Left ventricle myocardium inferior (tissue), 1 donor: ENCODE measurements at regions of chr1 and their contacts with region 1.

Region 1: DNA sequence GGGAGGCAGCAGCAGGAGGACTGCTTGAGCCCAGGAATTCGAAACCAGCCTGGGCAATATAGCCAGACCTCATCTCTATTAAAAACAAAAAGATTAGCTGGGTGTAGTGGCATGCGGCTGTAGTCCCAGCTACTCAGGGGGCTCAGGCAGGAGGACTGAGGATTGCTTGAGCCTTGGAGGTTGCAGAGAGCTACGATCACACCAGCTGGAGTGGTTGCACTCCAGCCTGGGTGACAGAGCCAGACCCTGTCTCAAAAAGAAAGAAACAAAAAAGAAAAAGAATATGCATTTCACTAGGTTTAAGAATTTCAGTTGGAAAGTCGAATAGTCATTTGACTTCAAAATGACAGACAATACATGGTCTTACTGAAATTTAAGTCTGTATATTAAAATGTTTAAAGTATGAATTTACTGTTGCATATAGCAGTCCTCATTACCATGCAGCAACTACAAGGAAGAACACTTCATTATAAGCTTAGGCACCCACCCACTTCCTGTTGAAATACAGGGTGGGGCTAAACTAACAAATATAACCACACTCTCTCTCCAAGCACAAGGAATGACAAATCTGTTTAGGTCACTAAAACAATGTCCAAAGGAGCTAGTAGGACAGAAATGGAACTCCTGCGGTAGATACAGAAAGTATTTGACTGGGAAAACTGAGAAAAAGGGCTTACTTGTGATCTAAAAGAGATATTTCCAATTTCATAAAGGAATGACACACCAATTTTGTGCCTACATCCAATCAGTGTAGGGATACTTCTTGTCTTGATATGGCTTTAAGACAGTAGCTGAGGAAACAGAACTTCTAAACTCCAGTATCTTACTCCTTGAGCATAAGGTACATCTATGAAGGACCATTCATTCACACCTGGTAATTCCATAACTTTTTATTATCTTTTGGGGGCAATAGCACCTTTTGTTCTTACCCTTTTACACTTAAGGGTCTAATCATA is 44.1 kb downstream of the GPR3 start:
- DNase-seq: no peak
- H3K4me3 ChIP-seq: peak overlapping the region; percentile 37
- H3K27ac ChIP-seq: peak overlapping the region; percentile 90
- H3K4me1 ChIP-seq: peaks cover 84% of the 10 kb centered on the region
- H3K27me3 ChIP-seq: no peaks in the 10 kb centered on the region
- CTCF ChIP-seq: no peak

Region 2: DNA sequence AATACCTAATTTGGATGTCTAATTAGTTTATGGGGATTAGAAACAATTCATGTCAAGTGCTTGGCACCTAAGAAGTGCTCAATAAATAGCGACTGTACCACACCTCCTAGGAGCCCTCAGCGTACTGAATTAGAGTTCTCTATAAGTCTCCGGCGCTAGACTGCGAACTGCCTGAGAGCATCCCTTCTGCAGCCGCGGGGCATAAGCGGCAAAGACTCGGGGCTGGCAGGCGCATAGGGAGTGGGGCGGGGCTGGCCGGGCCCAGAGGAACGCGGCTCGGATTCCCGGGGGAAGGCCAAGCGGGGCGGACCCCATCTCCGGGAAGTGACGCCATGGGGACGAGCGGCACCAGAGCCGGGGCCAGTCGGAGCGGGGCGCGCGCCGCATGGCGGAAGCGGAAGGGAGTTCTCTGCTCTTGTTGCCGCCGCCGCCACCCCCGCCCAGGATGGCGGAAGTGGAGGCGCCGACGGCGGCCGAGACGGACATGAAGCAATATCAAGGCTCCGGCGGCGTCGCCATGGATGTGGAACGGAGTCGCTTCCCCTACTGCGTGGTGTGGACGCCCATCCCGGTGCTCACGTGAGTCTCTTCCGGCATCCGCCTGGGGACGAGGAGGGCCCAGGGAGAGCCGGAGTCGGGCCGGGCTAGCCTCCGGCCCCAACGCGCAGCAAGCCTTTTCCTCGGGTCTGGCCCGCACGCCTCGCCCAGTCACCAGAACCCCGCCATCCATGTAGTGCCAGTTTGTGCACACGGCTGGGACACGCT is 114.5 kb before region 1 on chr1 and contains the start of gene TMEM222:
- intact Hi-C with region 1: no loop called
- DNase-seq: peak; percentile 98
- H3K4me3 ChIP-seq: peak within 1 kb of the TSS; percentile 82
- H3K27ac ChIP-seq: peak within 1 kb of the TSS; percentile 91
- H3K4me1 ChIP-seq: peaks cover 53% of the 10 kb centered on the region
- H3K27me3 ChIP-seq: no peaks in the 10 kb centered on the region
- CTCF ChIP-seq: peak; percentile 47
- total RNA-seq, gene TMEM222: 19.4 TPM

Region 3: DNA sequence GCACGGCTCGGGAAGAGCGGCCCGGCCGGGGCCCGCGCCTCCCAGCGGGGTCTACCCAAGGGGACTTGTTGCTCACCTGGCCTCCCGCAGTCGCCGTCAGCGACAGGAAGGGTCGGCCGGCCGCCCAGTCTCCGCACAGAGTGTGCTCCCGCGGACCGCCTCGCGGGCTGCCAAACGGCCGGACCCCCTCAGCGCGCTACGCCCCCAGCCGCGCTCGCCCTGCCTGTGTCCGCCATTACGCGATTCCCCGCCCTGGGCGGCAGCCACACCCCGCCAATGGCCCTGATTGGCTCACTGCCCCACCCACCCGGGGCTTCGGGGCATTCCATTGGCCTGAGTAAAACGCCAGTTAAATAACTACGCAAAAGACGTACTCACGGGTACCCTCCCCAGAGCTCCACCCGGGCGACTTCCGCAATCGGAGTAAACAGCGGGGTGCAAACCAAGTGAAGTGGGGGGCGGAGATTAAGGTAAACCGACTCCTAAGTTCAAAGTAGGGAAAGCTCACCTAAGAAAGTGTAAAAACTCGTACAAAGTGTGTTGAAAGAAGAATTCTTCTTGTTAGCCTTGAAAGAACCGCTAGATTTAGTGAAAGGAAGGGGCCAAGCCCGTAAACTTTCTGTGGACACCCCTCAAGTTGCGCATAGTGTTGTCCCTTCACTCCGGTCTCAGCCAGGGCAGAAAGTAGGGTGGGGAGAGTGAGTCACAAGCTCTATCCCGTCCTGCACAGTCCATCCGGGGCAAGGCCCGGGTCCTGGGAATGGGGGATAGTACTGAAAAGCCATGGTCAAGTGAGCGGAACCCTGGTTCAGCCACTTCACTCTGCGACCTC is 53.6 kb after region 1 on chr1 and contains the start of gene WASF2:
- intact Hi-C with region 1: loop called (anchors 10 kb)
- DNase-seq: peak; percentile 97
- H3K4me3 ChIP-seq: peak within 1 kb of the TSS; percentile 89
- H3K27ac ChIP-seq: peak within 1 kb of the TSS; percentile 99
- H3K4me1 ChIP-seq: peaks cover 71% of the 10 kb centered on the region
- H3K27me3 ChIP-seq: no peaks in the 10 kb centered on the region
- CTCF ChIP-seq: no peak
- total RNA-seq, gene WASF2: 51.2 TPM